ENCODE measurements at regions of chr12 and their contacts with region 1.

Region 1: DNA sequence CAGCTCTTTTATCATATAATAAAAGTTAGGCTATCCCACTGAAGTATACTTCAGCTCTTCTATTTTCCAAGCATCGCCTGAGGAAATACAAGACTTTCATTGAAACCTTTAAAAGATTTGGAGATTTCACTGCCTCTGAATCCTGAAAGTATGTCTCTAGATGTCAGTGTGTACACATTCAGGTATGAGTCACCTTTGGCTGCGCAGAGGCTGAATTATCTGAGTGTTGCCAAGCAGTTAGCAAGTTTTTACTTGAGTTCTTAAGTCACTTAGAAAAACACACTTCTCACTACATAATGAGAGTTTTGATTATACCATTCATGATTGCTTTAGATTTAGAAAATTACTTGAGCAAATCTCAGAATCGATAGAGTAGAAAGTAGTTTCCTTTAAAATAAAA is 210.3 kb downstream of the TMTC2 start:
- DNase-seq: peak; percentile 79
- H3K4me3 Mint-ChIP-seq: no peak overlapping the region
- H3K27ac Mint-ChIP-seq: no peak overlapping the region
- H3K4me1 Mint-ChIP-seq: no peaks in the 10 kb centered on the region
- H3K27me3 Mint-ChIP-seq: no peaks in the 10 kb centered on the region
- CTCF ChIP-seq: no peak

Region 2: GRCh38 chr12:82883394-82884350 is 13.3 kb before region 1 on chr12:
- CTCF ChIA-PET with region 1: interaction called, 10 read pairs
- POLR2A ChIA-PET with region 1: interaction called, 4 read pairs
- intact Hi-C with region 1: no loop called
- DNase-seq: no peak
- H3K4me3 Mint-ChIP-seq: no peak overlapping the region
- H3K27ac Mint-ChIP-seq: no peak overlapping the region
- H3K4me1 Mint-ChIP-seq: peaks cover 7% of the 10 kb centered on the region
- H3K27me3 Mint-ChIP-seq: no peaks in the 10 kb centered on the region
- CTCF ChIP-seq: no peak

Region 3: DNA sequence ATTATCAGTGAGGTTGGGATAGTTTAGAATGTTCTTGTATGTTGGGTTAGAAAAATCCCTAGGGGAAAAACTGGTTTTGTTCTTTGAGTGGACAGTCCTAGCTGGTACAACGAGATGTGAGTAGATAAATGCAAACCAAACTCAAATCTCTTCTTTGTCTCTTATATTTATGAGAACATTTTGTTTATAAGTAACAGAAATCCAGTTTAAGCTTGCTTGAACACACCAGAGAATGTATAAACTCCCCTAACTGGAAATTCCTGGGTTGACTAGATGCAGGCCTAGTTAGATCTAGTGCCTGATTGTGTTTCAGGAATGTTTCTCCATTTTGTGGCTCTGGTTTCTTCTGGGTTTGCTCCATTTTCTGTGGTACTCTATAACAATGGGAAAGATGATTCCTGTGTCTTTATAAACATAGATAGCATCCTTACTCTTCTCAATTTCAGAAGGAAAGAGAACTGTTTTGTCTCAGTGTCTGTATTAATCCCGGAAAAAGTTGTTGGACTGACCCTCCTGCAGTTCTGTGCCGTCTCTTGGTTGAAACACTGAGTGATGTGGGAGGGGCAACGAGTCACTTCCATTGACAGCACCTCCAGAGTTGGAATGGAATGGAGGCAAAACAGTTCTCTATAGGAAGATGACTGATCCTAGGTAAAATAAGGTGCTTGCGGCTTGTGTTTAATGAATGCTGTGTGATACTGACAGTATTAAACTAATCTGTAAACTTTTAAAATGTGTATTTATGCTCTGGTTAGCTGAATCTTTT is 34.6 kb after region 1 on chr12:
- CTCF ChIA-PET with region 1: no interaction called
- POLR2A ChIA-PET with region 1: no interaction called
- intact Hi-C with region 1: no loop called
- DNase-seq: peak; percentile 16
- H3K4me3 Mint-ChIP-seq: no peak overlapping the region
- H3K27ac Mint-ChIP-seq: no peak overlapping the region
- H3K4me1 Mint-ChIP-seq: no peaks in the 10 kb centered on the region
- H3K27me3 Mint-ChIP-seq: no peaks in the 10 kb centered on the region
- CTCF ChIP-seq: no peak